Activated CD8-positive, alpha-beta T cell treated with anti-CD3 and anti-CD28 coated beads for 36 hours (primary cell): ENCODE measurements at regions of chr19 and their contacts with region 1.

Region 1: GRCh38 chr19:49391581-49392399 is 3.7 kb downstream of the KASH5 start:
- DNase-seq: peak; percentile 82
- ATAC-seq: peak; percentile 86
- H3K4me3 Mint-ChIP-seq: no peak overlapping the region
- H3K27ac Mint-ChIP-seq: peak overlapping the region; percentile 23
- H3K4me1 Mint-ChIP-seq: peaks cover 10% of the 10 kb centered on the region
- H3K27me3 Mint-ChIP-seq: no peaks in the 10 kb centered on the region
- CTCF ChIP-seq: peak; percentile 93

Region 2: DNA sequence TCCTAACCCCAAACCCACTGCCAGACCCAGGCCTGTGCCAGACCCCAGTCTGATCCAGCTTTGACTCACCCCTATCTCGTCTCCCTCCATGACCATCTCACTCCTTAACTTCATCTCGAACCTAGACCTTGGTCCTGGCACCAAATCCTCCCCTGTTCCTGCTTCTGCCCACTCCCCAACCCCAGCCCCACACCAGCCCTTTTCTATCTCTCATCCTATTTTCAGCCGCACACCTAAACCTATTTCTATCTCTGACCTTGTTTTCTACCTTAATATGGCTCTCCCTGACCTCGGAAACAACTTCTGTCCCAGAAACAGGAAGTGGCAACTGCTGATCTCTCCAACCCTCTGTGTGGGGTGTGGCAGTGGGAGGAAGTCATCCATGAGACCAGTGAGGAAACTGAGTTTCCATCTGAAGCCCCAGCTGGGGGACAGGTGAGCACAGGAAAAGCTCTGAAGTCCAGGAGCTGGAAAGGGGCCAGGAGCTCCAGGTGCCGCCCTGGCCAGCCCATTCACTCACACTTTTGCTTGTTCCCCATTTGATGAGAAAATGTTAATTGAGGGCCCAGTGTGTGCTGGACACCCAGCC is 17.7 kb after region 1 on chr19:
- CTCF ChIA-PET with region 1: interaction called, 17 read pairs
- POLR2A ChIA-PET with region 1: no interaction called
- intact Hi-C with region 1: no loop called
- DNase-seq: peak; percentile 36
- ATAC-seq: peak; percentile 57
- H3K4me3 Mint-ChIP-seq: peak overlapping the region; percentile 1
- H3K27ac Mint-ChIP-seq: peak overlapping the region; percentile 59
- H3K4me1 Mint-ChIP-seq: peaks cover 35% of the 10 kb centered on the region
- H3K27me3 Mint-ChIP-seq: no peaks in the 10 kb centered on the region
- CTCF ChIP-seq: no peak

Region 3: GRCh38 chr19:49427855-49428546 is 36.2 kb after region 1 on chr19:
- CTCF ChIA-PET with region 1: interaction called, 10 read pairs
- POLR2A ChIA-PET with region 1: no interaction called
- intact Hi-C with region 1: loop called (anchors 5 kb)
- DNase-seq: peak; percentile 57
- ATAC-seq: peak; percentile 41
- H3K4me3 Mint-ChIP-seq: peak overlapping the region; percentile 38
- H3K27ac Mint-ChIP-seq: no peak overlapping the region
- H3K4me1 Mint-ChIP-seq: peaks cover 39% of the 10 kb centered on the region
- H3K27me3 Mint-ChIP-seq: peaks cover 80% of the 10 kb centered on the region
- CTCF ChIP-seq: no peak

Region 4: GRCh38 chr19:49443366-49444099 is 51.7 kb after region 1 on chr19:
- CTCF ChIA-PET with region 1: interaction called, 13 read pairs
- POLR2A ChIA-PET with region 1: interaction called, 6 read pairs
- intact Hi-C with region 1: loop called (anchors 5 kb)
- DNase-seq: peak; percentile 97
- ATAC-seq: peak; percentile 87
- H3K4me3 Mint-ChIP-seq: peak overlapping the region; percentile 74
- H3K27ac Mint-ChIP-seq: peak overlapping the region; percentile 83
- H3K4me1 Mint-ChIP-seq: peaks cover 37% of the 10 kb centered on the region
- H3K27me3 Mint-ChIP-seq: peaks cover 37% of the 10 kb centered on the region
- CTCF ChIP-seq: peak; percentile 88

Region 5: DNA sequence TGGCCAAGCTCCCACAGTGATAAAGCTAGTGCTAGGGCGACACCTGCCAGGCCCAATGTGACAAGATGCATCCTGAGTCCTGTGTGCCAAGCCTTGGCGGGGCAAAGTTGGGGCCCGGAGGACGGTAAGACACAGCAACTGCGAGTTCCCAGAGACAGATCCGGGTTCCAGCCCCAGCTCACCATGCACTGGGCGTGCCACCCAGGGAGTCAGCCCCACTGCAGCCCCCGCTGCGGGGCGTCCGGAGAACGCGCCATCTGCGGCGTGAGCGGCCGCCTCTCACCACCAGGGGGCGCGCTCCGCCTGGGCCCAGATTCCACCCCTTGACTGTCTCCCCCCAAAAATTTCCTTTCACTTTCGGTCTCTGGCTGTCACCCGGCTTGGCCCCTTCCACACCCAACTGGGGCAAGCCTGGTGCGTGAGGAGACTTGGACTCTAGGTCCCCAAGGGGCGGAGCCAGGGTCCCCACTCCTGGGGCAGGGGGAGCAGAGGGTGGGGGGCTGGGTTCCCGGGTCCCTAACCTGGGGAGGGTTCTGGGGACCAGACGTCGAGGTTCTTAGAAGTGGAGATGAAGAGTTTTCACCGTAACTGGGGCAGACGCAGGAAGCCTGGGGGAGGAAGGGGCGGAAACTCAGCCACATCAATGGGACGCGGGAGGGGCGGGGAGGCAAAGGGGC is 82.2 kb after region 1 on chr19 and contains the start of gene FLT3LG:
- CTCF ChIA-PET with region 1: interaction called, 16 read pairs
- POLR2A ChIA-PET with region 1: interaction called, 3 read pairs
- intact Hi-C with region 1: no loop called
- DNase-seq: peak; percentile 93
- ATAC-seq: peak; percentile 60
- H3K4me3 Mint-ChIP-seq: peak within 1 kb of the TSS; percentile 89
- H3K27ac Mint-ChIP-seq: peak within 1 kb of the TSS; percentile 92
- H3K4me1 Mint-ChIP-seq: peaks cover 45% of the 10 kb centered on the region
- H3K27me3 Mint-ChIP-seq: no peaks in the 10 kb centered on the region
- CTCF ChIP-seq: peak; percentile 94
- total RNA-seq, gene FLT3LG: 57.7 to 61.2 TPM

Region 6: DNA sequence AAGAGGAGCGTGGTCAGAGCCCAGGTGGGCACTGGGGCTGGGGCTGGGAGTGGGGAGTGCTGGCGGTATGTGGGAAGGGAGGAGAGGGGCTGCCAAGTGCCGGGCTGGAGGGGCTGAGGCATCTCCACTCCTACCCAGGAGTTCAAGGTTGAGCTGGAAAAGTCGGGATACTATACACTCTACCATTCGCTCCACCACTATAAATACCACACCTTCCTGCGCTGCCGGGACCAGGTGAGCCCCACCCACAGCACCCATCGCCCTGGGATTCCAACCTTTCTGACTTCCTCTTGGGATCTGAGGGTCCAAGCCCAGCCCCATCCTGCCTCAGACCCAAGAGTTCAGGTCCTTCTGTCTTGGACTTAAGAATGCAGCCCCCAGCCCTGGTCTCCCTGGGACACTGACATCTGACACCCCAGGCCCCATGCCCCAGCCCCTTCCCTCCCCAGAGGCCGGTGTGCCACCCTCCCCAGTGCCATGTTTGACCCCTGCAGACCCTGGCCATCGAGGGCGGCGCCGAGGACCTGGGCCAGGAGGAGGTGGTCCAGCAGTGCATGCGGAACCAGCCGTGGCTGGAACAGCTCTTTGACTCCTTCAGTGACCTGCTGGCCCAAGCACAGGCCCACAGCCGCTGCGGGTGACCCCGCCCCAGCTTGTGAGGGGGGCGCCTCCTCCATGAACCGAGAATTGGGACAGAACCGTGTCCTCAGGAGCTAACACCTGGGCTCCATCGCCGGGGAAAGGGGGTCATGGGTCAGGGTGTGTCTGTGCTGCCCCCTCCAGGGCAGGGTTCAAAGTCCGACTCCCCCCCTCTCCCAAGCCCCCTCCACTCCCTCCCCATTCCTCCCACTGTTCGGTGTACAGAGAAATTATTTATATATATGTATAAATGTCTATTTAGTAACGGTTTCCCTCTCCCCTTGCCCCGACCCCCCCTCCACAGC is 233.4 kb after region 1 on chr19:
- CTCF ChIA-PET with region 1: no interaction called
- POLR2A ChIA-PET with region 1: no interaction called
- intact Hi-C with region 1: no loop called
- DNase-seq: no peak
- ATAC-seq: no peak
- H3K4me3 Mint-ChIP-seq: no peak overlapping the region
- H3K27ac Mint-ChIP-seq: no peak overlapping the region
- H3K4me1 Mint-ChIP-seq: no peaks in the 10 kb centered on the region
- H3K27me3 Mint-ChIP-seq: no peaks in the 10 kb centered on the region
- CTCF ChIP-seq: no peak